MCF 10A (cell line): ENCODE measurements at regions of chr1 and their contacts with region 1.

Region 1: DNA sequence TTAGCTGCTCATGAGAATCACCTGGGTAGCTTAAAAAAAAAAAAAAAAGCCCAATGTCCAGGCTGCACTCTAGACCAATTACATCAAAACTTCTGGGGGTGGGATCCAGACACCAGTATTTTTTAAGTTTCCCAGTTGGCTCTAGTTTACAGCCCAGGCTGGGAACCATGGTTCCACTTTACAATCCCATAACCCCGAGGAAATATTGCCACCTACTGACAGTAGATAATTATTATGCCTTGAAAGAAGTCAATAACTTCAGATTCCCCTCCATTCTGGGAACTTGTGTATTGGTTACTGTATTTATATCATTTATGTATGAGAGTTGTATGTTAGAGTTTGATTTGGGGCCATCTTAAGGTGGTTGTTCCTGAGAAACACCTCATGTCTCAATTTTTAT is 100.2 kb downstream of the SPATA46 start:
- DNase-seq: peak; percentile 66
- H3K4me3 Mint-ChIP-seq: no peak overlapping the region
- H3K27ac Mint-ChIP-seq: no peak overlapping the region
- H3K4me1 Mint-ChIP-seq: peaks cover 7% of the 10 kb centered on the region
- H3K27me3 Mint-ChIP-seq: no peaks in the 10 kb centered on the region
- CTCF ChIP-seq: peak; percentile 64

Region 2: DNA sequence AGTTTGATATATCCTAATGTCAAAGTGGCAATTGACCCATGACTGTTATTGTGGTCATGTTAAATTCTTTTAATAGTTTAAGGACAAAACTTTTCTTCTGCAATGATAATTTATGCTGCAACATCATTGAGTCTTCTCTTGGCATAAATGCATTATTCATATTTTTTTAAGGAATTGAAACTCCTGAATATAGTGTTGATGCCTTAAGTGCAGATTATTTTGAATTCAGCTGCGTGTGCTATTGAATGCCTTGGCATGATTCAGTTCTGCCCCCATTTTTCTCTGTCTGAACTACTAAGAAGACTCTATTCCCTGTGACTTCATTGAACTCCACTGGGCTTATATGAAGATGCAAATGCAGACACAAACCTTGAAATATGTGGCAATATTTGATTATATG is 229.6 kb before region 1 on chr1:
- CTCF ChIA-PET with region 1: interaction called, 50 read pairs
- POLR2A ChIA-PET with region 1: no interaction called
- intact Hi-C with region 1: no loop called
- DNase-seq: no peak
- H3K4me3 Mint-ChIP-seq: no peak overlapping the region
- H3K27ac Mint-ChIP-seq: no peak overlapping the region
- H3K4me1 Mint-ChIP-seq: no peaks in the 10 kb centered on the region
- H3K27me3 Mint-ChIP-seq: no peaks in the 10 kb centered on the region
- CTCF ChIP-seq: no peak

Region 3: GRCh38 chr1:162069328-162070093 is 207.0 kb before region 1 on chr1 and contains the start of gene NOS1AP:
- CTCF ChIA-PET with region 1: interaction called, 33 read pairs
- POLR2A ChIA-PET with region 1: interaction called, 4 read pairs
- intact Hi-C with region 1: no loop called
- DNase-seq: peak; percentile 82
- H3K4me3 Mint-ChIP-seq: peak within 1 kb of the TSS; percentile 84
- H3K27ac Mint-ChIP-seq: no peak within 1 kb of the TSS
- H3K4me1 Mint-ChIP-seq: peaks cover 12% of the 10 kb centered on the region
- H3K27me3 Mint-ChIP-seq: no peaks in the 10 kb centered on the region
- CTCF ChIP-seq: no peak
- total RNA-seq, gene NOS1AP: 1.1 and 2.4 TPM in 2 replicates

Region 4: GRCh38 chr1:162256287-162256686 is 20.2 kb before region 1 on chr1:
- CTCF ChIA-PET with region 1: interaction called, 23 read pairs
- POLR2A ChIA-PET with region 1: no interaction called
- intact Hi-C with region 1: no loop called
- DNase-seq: no peak
- H3K4me3 Mint-ChIP-seq: no peak overlapping the region
- H3K27ac Mint-ChIP-seq: no peak overlapping the region
- H3K4me1 Mint-ChIP-seq: no peaks in the 10 kb centered on the region
- H3K27me3 Mint-ChIP-seq: peaks cover 2% of the 10 kb centered on the region
- CTCF ChIP-seq: no peak

Region 5: GRCh38 chr1:162265983-162266382 is 10.5 kb before region 1 on chr1:
- CTCF ChIA-PET with region 1: interaction called, 23 read pairs
- POLR2A ChIA-PET with region 1: interaction called, 4 read pairs
- intact Hi-C with region 1: no loop called
- DNase-seq: no peak
- H3K4me3 Mint-ChIP-seq: no peak overlapping the region
- H3K27ac Mint-ChIP-seq: no peak overlapping the region
- H3K4me1 Mint-ChIP-seq: no peaks in the 10 kb centered on the region
- H3K27me3 Mint-ChIP-seq: peaks cover 13% of the 10 kb centered on the region
- CTCF ChIP-seq: no peak

Region 6: GRCh38 chr1:162327144-162327793 is 50.8 kb after region 1 on chr1:
- CTCF ChIA-PET with region 1: no interaction called
- POLR2A ChIA-PET with region 1: no interaction called
- intact Hi-C with region 1: no loop called
- DNase-seq: peak; percentile 75
- H3K4me3 Mint-ChIP-seq: no peak overlapping the region
- H3K27ac Mint-ChIP-seq: peak overlapping the region; percentile 33
- H3K4me1 Mint-ChIP-seq: peaks cover 20% of the 10 kb centered on the region
- H3K27me3 Mint-ChIP-seq: no peaks in the 10 kb centered on the region
- CTCF ChIP-seq: no peak

Region 7: GRCh38 chr1:162357681-162358266 is 81.3 kb after region 1 on chr1:
- CTCF ChIA-PET with region 1: interaction called, 12 read pairs
- POLR2A ChIA-PET with region 1: no interaction called
- intact Hi-C with region 1: no loop called
- DNase-seq: peak; percentile 80
- H3K4me3 Mint-ChIP-seq: no peak overlapping the region
- H3K27ac Mint-ChIP-seq: no peak overlapping the region
- H3K4me1 Mint-ChIP-seq: peaks cover 8% of the 10 kb centered on the region
- H3K27me3 Mint-ChIP-seq: no peaks in the 10 kb centered on the region
- CTCF ChIP-seq: peak; percentile 83